OCI-LY7 (cell line): ENCODE measurements at regions of chr6 and their contacts with region 1.

Region 1: GRCh38 chr6:107114213-107114905 is 956 bp downstream of the BEND3 start:
- DNase-seq: peak; percentile 91
- H3K4me3 ChIP-seq: peak overlapping the region; percentile 71
- H3K27ac ChIP-seq: peak overlapping the region; percentile 99
- H3K4me1 ChIP-seq: peaks cover 53% of the 10 kb centered on the region
- CTCF ChIP-seq: peak; percentile 83

Region 2: DNA sequence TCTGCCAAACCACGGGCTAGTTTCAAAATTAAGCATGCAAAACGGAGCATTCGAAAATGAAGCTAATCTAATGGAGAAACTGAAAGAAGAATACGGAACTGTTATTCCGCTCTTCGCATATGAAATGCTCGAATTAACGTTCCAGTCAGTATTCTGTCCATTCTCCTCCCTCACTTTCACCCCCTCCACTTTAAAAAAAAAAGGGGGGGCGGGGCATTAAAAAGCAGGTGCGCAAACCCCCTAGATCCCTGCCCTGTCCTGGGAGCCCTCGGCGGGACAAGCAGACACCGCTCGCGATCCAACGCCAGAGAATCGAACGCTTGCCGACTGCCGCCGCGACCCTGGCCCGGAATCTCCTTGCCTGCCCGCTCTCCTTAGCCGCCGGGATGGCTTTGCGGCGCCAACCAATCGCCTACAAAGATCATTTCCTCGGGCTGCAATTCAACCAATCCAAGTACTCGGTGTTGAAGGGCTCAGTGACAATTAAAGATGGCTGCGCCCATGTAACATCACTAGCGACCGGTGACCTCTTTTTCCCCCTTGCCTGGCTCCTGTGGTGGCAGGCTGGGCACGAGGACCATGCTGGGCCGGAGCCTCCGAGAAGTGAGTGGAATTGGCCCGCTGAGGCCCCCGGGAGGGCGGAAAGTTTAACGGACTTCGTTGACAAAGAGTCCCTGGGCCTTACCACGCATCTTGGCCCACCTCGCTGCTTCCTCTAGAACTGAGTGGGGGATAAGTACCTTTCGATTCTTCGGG is 485.1 kb before region 1 on chr6 and contains the starts of genes QRSL1 and RTN4IP1:
- CTCF ChIA-PET with region 1: no interaction called
- POLR2A ChIA-PET with region 1: no interaction called
- intact Hi-C with region 1: loop called (anchors 5 kb)
- DNase-seq: peak; percentile 95
- H3K4me3 ChIP-seq: peak within 1 kb of the TSS; percentile 83
- H3K27ac ChIP-seq: peak within 1 kb of the TSS; percentile 98
- H3K4me1 ChIP-seq: peaks cover 54% of the 10 kb centered on the region
- CTCF ChIP-seq: no peak
- total RNA-seq, gene QRSL1: 63.9 and 65.7 TPM in 2 replicates
- total RNA-seq, gene RTN4IP1: 25.2 TPM in 2 replicates

Region 3: GRCh38 chr6:107033126-107033525 is 81.2 kb before region 1 on chr6:
- CTCF ChIA-PET with region 1: no interaction called
- POLR2A ChIA-PET with region 1: no interaction called
- intact Hi-C with region 1: loop called (anchors 1 kb)
- DNase-seq: no peak
- H3K4me3 ChIP-seq: no peak overlapping the region
- H3K27ac ChIP-seq: no peak overlapping the region
- H3K4me1 ChIP-seq: no peaks in the 10 kb centered on the region
- CTCF ChIP-seq: no peak

Region 4: DNA sequence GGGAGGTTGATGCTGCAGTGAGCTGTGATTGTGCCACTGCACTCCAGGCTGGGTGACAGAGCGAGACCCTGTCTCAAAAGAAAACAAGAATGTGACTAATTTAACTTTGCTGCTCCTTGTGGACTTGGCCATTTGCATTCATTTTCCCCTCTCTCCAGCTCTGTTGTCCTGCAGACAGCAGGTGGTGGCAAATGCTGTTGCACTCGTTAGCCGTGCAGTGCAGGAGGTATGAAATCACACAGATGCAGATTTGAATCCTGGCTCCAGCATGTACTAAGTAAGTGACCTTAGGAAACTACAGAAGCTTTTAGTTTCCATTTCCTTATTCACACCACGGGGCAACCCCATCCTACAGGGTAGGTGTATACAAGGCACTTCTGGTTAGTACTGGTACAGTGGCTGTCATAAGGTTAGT is 10.6 kb after region 1 on chr6:
- CTCF ChIA-PET with region 1: interaction called, 7 read pairs
- POLR2A ChIA-PET with region 1: interaction called, 16 read pairs
- intact Hi-C with region 1: no loop called
- DNase-seq: peak; percentile 73
- H3K4me3 ChIP-seq: peak overlapping the region; percentile 23
- H3K27ac ChIP-seq: peak overlapping the region; percentile 40
- H3K4me1 ChIP-seq: peaks cover 54% of the 10 kb centered on the region
- CTCF ChIP-seq: peak; percentile 39; the same call in 1 of the 2 replicates

Region 5: DNA sequence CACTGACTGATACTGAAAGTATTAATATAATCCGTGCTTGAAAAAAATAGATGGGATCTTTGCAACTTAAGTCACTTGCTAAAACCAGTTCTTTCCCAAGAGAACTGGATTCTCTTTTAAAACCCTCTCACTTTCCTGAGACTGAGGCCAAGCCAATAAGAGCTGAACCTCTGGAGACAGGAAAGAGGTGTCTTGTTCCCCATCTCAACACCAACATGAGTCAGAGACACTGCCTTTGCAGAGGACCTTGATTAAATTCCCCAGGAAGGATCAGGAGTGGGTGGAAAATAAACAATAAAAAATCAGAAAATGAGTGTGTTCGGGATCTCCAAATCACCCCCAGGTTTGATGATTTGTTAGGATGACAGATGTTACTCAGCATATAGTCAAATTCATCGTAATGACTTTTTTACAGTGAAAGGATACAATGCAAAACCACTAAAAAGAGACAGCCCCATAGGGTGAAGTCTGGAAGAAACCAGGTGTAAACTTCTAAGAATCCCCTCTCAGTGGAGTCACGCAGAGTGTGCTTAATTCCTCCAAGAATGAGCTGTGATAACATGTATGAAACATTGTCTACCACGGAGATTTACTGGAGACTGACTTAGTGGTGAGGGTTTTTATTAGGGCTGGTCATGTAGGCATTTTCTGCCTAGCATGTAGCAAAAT is 123.8 kb after region 1 on chr6:
- CTCF ChIA-PET with region 1: no interaction called
- POLR2A ChIA-PET with region 1: no interaction called
- intact Hi-C with region 1: no loop called
- DNase-seq: no peak
- H3K4me3 ChIP-seq: no peak overlapping the region
- H3K27ac ChIP-seq: no peak overlapping the region
- H3K4me1 ChIP-seq: no peaks in the 10 kb centered on the region
- CTCF ChIP-seq: no peak

Region 6: DNA sequence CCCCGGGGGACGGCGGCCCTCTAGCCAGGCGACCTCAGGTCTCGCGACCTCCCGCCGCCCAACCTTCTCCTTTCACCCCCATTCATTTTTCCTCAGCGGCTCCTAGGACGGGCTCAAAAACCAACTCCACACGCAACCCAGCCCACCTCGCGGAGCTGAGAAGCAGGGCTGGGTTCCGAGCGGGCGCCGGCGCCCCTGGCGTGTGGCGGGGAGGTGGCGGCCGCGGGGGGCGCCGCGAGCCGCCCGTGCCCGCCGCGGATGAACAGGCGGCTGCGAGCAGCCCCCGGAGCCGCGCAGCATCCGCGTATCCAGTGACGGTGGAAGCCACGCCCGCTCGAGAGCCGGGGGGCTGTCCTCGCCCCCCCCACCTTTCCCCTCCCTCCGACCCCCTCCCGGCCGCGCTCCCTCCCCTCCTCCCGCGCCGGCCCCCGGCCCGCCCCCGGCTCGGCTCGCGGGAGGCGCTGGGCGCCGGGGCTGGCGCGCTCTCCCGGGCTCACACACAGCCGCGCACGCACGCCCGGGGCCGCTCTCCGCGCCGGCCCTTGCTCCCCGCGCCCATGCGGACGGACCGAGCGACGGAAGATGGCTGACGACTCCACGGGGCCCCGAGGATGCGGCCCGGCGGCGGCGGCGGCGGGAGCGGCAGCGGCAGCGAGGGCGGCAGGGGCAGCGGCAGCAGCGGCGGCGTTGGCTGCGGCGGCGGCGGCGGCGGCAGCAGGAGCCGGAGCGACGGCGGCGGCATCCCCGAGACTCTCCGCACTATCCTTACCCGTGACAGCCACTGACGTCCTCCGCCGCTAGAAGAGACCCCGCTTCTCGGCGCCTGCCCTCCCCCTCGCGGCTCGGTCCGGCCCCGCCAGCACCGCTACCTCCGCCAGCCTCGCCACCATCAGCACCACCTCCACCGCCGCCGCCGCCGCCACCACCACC is 375.5 kb after region 1 on chr6 and contains the start of gene SOBP:
- CTCF ChIA-PET with region 1: no interaction called
- POLR2A ChIA-PET with region 1: interaction called, 6 read pairs
- intact Hi-C with region 1: loop called (anchors 5 kb)
- DNase-seq: peak; percentile 91
- H3K4me3 ChIP-seq: peak within 1 kb of the TSS; percentile 95
- H3K27ac ChIP-seq: peak within 1 kb of the TSS; percentile 68
- H3K4me1 ChIP-seq: peaks cover 46% of the 10 kb centered on the region
- CTCF ChIP-seq: peak; percentile 60
- total RNA-seq, gene SOBP: 16.0 and 21.5 TPM in 2 replicates

Region 7: GRCh38 chr6:107957909-107958688 is 843.7 kb after region 1 on chr6 and contains the start of gene SEC63:
- CTCF ChIA-PET with region 1: no interaction called
- POLR2A ChIA-PET with region 1: no interaction called
- intact Hi-C with region 1: loop called (anchors 5 kb)
- DNase-seq: peak; percentile 98
- H3K4me3 ChIP-seq: peak within 1 kb of the TSS; percentile 98
- H3K27ac ChIP-seq: peak within 1 kb of the TSS; percentile 83
- H3K4me1 ChIP-seq: peaks cover 22% of the 10 kb centered on the region
- CTCF ChIP-seq: no peak
- total RNA-seq, gene SEC63: 13.0 and 13.6 TPM in 2 replicates